ENCODE measurements at regions of chr2 and their contacts with region 1.

Region 1: DNA sequence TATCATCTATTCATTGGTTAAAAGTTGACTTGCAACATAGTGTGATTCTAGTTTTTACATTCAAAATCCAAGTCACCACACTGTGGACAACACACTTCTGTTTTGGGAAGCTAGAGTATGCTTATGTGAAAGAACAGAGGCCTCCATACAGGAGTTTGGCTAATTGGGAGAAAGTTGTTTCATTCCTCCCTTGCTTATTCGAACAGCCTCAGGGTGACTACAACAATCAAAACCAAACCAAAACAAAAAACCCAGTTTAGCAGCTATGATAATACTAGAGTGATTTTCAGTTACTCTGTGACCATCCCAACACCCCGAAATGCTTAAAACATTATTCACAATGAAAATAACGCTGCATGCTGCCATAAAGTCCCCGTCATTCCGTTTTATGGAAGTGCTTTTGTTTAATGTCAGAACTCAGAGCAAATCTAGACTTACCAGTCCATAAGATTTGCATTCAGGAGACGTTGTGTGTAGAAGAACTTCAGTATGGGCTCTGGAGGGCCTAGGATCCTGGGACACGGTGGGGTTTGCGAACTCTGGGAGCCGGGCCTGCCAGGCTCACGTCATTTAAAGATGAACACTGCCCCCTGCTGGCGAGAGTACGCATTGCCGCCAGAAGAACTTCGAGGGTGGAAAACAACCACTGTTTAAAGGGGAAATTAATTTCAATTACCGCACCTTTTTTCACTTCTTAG is 111.4 kb downstream of the FTCDNL1 start:
- H3K4me3 ChIP-seq: no peak overlapping the region
- H3K27ac ChIP-seq: no peak overlapping the region
- H3K4me1 ChIP-seq: peaks cover 9% of the 10 kb centered on the region
- CTCF ChIP-seq: peak; percentile 76

Region 2: GRCh38 chr2:199499005-199499404 is 240.6 kb before region 1 on chr2:
- CTCF ChIA-PET with region 1: no interaction called
- POLR2A ChIA-PET with region 1: no interaction called
- H3K4me3 ChIP-seq: no peak overlapping the region
- H3K27ac ChIP-seq: no peak overlapping the region
- H3K4me1 ChIP-seq: no peaks in the 10 kb centered on the region
- CTCF ChIP-seq: no peak

Region 3: GRCh38 chr2:199602271-199602895 is 137.2 kb before region 1 on chr2:
- CTCF ChIA-PET with region 1: interaction called, 11 read pairs
- POLR2A ChIA-PET with region 1: no interaction called
- H3K4me3 ChIP-seq: no peak overlapping the region
- H3K27ac ChIP-seq: no peak overlapping the region
- H3K4me1 ChIP-seq: no peaks in the 10 kb centered on the region
- CTCF ChIP-seq: no peak

Region 4: GRCh38 chr2:199612509-199613130 is 126.9 kb before region 1 on chr2:
- CTCF ChIA-PET with region 1: no interaction called
- POLR2A ChIA-PET with region 1: no interaction called
- H3K4me3 ChIP-seq: no peak overlapping the region
- H3K27ac ChIP-seq: no peak overlapping the region
- H3K4me1 ChIP-seq: no peaks in the 10 kb centered on the region
- CTCF ChIP-seq: no peak

Region 5: DNA sequence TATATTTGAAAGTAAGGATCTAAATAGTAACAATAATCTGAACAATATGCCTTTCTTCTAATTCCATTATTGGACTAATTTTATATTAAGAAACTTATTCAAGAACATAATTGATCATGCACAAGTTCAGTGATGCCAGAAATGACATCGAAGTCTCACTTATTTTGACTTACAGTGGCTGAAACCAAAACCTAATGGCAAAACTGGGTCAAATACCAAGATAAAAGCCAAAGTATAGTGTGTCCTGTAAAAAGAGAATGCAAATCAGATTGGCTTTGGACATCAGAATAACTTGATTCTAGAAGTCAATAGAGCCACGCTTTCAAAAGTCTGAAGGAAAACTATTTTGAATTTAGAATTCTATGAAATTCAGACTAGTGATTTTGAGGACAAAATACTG is 25.8 kb before region 1 on chr2:
- CTCF ChIA-PET with region 1: interaction called, 16 read pairs
- POLR2A ChIA-PET with region 1: no interaction called
- H3K4me3 ChIP-seq: no peak overlapping the region
- H3K27ac ChIP-seq: no peak overlapping the region
- H3K4me1 ChIP-seq: peaks cover 15% of the 10 kb centered on the region
- CTCF ChIP-seq: no peak

Region 6: DNA sequence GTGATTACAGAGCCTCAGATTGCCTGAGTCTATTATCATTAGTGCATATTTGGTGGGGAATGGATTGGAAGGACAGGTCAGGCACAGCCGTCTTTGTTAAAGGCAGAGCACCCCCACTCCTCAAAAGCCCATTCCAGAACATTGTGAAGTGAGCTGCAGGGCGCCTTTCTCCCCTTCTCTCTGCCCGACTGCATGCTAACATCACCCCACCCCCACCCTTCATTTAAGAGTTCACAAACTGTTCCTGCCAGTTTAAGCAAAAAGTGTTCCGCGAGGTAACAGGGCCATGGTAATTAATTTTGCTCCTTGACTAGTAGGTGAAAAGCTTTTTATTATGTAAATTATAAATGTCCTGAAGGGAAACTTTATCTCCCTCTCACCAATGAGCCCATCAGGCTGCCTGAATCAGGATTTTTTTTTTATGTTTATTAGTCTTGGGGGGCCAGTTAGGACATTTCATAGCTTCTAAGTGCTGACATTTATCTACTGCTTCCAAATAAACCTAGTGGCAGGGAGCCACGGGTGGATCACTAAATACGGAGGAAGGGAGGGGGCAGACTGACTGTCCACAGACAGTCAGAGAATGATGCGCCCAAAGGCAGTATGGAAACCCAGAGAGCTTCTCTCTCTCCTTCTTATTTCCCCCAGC is 12.0 kb after region 1 on chr2:
- CTCF ChIA-PET with region 1: interaction called, 24 read pairs
- POLR2A ChIA-PET with region 1: no interaction called
- H3K4me3 ChIP-seq: no peak overlapping the region
- H3K27ac ChIP-seq: no peak overlapping the region
- H3K4me1 ChIP-seq: no peaks in the 10 kb centered on the region; the same call in 1 of the 2 replicates
- CTCF ChIP-seq: no peak

Measured in HEK293 (cell line).